CD8-positive, alpha-beta memory T cell (primary cell): ENCODE measurements at regions of chr6 and their contacts with region 1.

Region 1: GRCh38 chr6:30483677-30484279 is 5.5 kb upstream of the HLA-E start:
- DNase-seq: peak in 2 of 5 donors; percentile 35 to 41
- H3K4me3 ChIP-seq: no peak overlapping the region
- H3K4me3 Mint-ChIP-seq: no peak overlapping the region
- H3K27ac ChIP-seq: no peak overlapping the region
- H3K27ac Mint-ChIP-seq: peak overlapping the region in 1 of 8 donors; percentile 53
- H3K4me1 ChIP-seq: peaks cover 29% of the 10 kb centered on the region
- H3K4me1 Mint-ChIP-seq: peaks cover 31 to 41% (median 34%) of the 10 kb centered on the region in 3 donors
- H3K27me3 ChIP-seq: peaks cover 21% of the 10 kb centered on the region
- H3K27me3 Mint-ChIP-seq: peaks cover 27 to 34% of the 10 kb centered on the region in 2 donors

Region 2: GRCh38 chr6:30453508-30454116 is 30.2 kb before region 1 on chr6:
- CTCF ChIA-PET with region 1: interaction called, 16 read pairs
- POLR2A ChIA-PET with region 1: no interaction called
- DNase-seq: peak; percentile 72 to 89 (median 81)
- H3K4me3 ChIP-seq: no peak overlapping the region
- H3K4me3 Mint-ChIP-seq: peak overlapping the region in 5 of 7 donors; percentile 25 to 75 (median 50)
- H3K27ac ChIP-seq: no peak overlapping the region
- H3K27ac Mint-ChIP-seq: peak overlapping the region in 1 of 8 donors; percentile 58
- H3K4me1 ChIP-seq: peaks cover 35% of the 10 kb centered on the region
- H3K4me1 Mint-ChIP-seq: peaks cover 39 to 55% (median 47%) of the 10 kb centered on the region in 3 donors
- H3K27me3 ChIP-seq: peaks cover 67% of the 10 kb centered on the region
- H3K27me3 Mint-ChIP-seq: peaks cover 54 to 85% of the 10 kb centered on the region in 2 donors

Region 3: DNA sequence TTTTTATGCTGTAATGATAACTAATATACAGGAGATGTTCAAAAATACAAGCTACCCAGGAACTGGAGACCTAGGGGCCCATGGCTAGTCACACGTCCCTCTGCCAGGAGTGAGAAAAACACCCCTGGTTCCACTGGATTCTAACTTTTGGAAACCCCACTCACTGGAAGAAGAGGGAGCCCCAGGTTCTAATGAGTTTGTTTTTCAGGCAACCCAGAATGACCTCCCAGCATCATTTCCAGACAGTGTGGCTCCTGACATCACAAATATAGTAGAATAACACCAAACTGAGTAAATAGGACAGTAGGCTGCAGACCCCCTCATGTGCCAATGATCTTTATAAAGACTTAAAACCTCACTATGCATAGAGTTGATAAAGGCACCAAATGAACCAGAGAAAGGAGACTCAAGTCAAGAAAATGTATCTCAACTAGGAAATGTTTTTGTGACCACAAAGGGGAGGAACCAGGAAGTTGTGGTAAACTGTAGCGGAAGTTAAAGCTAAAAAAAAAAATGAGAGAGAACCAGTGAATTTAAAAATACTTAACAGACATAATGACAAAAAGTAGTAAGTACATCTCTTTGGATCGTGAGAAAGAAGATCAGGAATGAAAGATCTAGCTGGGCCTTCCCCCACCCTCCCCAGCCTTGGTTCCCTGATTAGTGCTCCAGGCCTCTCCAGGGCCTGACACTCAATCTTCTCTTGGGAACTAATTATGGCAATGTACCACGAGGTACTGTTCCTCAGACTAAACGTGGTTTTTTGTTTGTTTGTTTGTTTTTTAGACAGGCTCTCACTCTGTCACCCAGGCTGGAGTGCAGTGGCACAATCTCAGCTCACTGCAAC is 25.3 kb after region 1 on chr6:
- CTCF ChIA-PET with region 1: interaction called, 15 read pairs
- POLR2A ChIA-PET with region 1: interaction called, 3 read pairs
- DNase-seq: peak in 2 of 5 donors; percentile 79 to 84
- H3K4me3 ChIP-seq: peak overlapping the region; percentile 27
- H3K4me3 Mint-ChIP-seq: peak overlapping the region; percentile 59 to 82 (median 72)
- H3K27ac ChIP-seq: no peak overlapping the region
- H3K27ac Mint-ChIP-seq: peak overlapping the region; percentile 71 to 97 (median 86)
- H3K4me1 ChIP-seq: peaks cover 59% of the 10 kb centered on the region
- H3K4me1 Mint-ChIP-seq: peaks cover 53 to 68% (median 68%) of the 10 kb centered on the region in 3 donors
- H3K27me3 ChIP-seq: no peaks in the 10 kb centered on the region
- H3K27me3 Mint-ChIP-seq: no peaks in the 10 kb centered on the region

Region 4: DNA sequence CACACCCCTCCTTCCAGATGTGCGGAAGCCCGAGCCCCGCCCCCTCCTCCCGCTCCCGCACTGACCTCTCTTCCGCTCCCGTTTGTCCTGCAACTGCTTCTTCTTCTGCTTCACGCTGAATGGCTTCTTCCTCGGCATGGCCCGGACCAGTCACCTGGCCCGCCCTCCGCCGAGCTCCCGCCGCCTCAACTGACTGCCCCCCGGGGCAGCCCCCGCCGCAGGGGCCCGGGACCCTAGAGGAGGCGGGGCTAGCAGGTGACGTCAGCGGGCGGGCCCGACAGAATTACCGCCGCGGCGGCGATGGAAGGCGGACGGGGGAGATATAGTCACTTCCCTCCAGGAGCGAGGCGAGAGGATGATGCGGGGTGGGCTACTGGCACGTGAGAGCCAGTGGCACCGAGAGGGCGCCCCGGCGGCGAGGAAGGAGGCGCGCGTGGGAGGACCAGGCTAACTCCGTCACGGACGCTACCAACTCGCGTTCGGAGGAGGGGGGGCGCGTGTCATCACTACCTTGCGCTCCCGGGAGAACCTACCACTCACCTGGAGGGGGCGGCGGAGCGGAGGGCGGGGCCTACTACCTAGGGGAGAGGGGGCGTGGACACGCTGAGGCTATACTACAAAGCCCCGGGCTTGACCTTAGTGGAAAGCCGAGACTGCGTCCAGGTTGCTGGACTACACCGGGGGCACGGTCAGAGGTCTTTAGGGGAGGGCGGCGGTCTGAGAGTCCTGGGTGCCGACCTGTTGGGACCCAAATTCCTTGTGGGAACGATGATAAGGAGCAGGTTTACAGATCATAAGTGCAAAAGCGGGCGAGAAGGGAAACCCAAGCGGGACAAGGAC is 72.5 kb after region 1 on chr6 and contains the start of gene GNL1:
- CTCF ChIA-PET with region 1: interaction called, 17 read pairs
- POLR2A ChIA-PET with region 1: interaction called, 3 read pairs
- DNase-seq: peak; percentile 99 to 100 (median 99)
- H3K4me3 ChIP-seq: peak within 1 kb of the TSS; percentile 97
- H3K4me3 Mint-ChIP-seq: peak within 1 kb of the TSS; percentile 94 to 100 (median 99)
- H3K27ac ChIP-seq: peak within 1 kb of the TSS; percentile 98
- H3K27ac Mint-ChIP-seq: peak within 1 kb of the TSS; percentile 98 to 100 (median 100)
- H3K4me1 ChIP-seq: peaks cover 13% of the 10 kb centered on the region
- H3K4me1 Mint-ChIP-seq: peaks cover 39 to 63% (median 58%) of the 10 kb centered on the region in 3 donors
- H3K27me3 ChIP-seq: no peaks in the 10 kb centered on the region
- H3K27me3 Mint-ChIP-seq: peaks cover 0 to 4% of the 10 kb centered on the region in 2 donors
- total RNA-seq, gene GNL1: 100 to 102 TPM

Region 5: DNA sequence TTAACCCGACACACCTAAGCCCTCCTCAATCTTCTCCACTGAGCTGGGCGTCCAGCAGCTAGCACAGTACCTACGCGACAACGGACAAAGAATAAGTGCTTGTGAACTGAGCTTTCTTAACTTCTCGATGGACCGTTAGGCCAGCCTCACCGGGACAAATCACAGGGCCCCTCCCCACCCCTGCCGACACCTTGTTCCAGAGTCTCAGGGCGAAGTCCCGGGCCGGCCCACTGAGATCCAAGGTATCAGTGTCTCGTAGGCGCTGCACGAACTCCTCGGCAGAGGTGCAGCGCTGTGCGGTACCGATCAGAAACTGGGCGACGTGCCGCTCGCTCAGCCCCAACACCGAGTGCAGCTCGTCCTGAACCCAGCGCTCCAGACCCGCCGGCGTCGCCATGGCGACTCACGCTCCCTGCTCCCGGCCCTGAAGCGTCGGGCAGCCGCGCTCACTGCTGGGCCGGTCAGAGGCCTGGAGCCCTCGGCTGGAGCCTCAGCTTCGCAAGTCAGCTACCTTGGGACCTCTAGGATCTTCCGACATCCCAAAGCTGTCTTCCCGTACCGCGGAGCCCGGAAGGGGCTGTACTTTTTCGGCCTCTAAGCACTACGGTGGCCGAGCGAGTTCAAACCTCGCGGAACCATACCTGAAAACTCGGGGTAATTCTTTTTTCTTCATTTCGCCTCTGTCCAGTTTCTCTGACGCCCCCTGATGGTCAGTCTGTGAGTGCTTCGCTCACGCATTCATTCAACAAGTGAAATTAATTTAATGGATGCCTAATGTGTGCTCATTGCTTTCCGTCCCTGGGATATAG is 188.9 kb after region 1 on chr6 and contains the start of gene DHX16:
- CTCF ChIA-PET with region 1: interaction called, 22 read pairs
- POLR2A ChIA-PET with region 1: no interaction called
- DNase-seq: peak; percentile 82 to 92 (median 84)
- H3K4me3 ChIP-seq: peak within 1 kb of the TSS; percentile 80
- H3K4me3 Mint-ChIP-seq: peak within 1 kb of the TSS; percentile 77 to 97 (median 89)
- H3K27ac ChIP-seq: peak within 1 kb of the TSS; percentile 67
- H3K27ac Mint-ChIP-seq: peak within 1 kb of the TSS; percentile 74 to 92 (median 86)
- H3K4me1 ChIP-seq: peaks cover 18% of the 10 kb centered on the region
- H3K4me1 Mint-ChIP-seq: peaks cover 30 to 42% (median 40%) of the 10 kb centered on the region in 3 donors
- H3K27me3 ChIP-seq: no peaks in the 10 kb centered on the region
- H3K27me3 Mint-ChIP-seq: no peaks in the 10 kb centered on the region
- total RNA-seq, gene DHX16: 47.5 to 49.1 TPM

Region 6: GRCh38 chr6:30717042-30717844 is 233.5 kb after region 1 on chr6 and contains the start of gene MDC1:
- CTCF ChIA-PET with region 1: interaction called, 12 read pairs
- POLR2A ChIA-PET with region 1: no interaction called
- DNase-seq: peak; percentile 97 to 100 (median 99)
- H3K4me3 ChIP-seq: peak within 1 kb of the TSS; percentile 85
- H3K4me3 Mint-ChIP-seq: peak within 1 kb of the TSS; percentile 90 to 98 (median 94)
- H3K27ac ChIP-seq: peak within 1 kb of the TSS; percentile 92
- H3K27ac Mint-ChIP-seq: peak within 1 kb of the TSS; percentile 92 to 100 (median 99)
- H3K4me1 ChIP-seq: peaks cover 20% of the 10 kb centered on the region
- H3K4me1 Mint-ChIP-seq: peaks cover 45 to 64% (median 46%) of the 10 kb centered on the region in 3 donors
- H3K27me3 ChIP-seq: no peaks in the 10 kb centered on the region
- H3K27me3 Mint-ChIP-seq: peaks cover 0 to 2% of the 10 kb centered on the region in 2 donors
- total RNA-seq, gene MDC1: 59.4 to 71.1 TPM

Region 7: GRCh38 chr6:30781743-30782424 is 298.1 kb after region 1 on chr6:
- CTCF ChIA-PET with region 1: no interaction called
- POLR2A ChIA-PET with region 1: no interaction called
- DNase-seq: no peak
- H3K4me3 ChIP-seq: no peak overlapping the region
- H3K4me3 Mint-ChIP-seq: no peak overlapping the region
- H3K27ac ChIP-seq: peak overlapping the region; percentile 64
- H3K27ac Mint-ChIP-seq: peak overlapping the region in 1 of 8 donors; percentile 88
- H3K4me1 ChIP-seq: peaks cover 32% of the 10 kb centered on the region
- H3K4me1 Mint-ChIP-seq: peaks cover 5 to 18% (median 16%) of the 10 kb centered on the region in 3 donors
- H3K27me3 ChIP-seq: no peaks in the 10 kb centered on the region
- H3K27me3 Mint-ChIP-seq: peaks cover 0 to 1% of the 10 kb centered on the region in 2 donors